ENCODE measurements at regions of chr2 and their contacts with region 1.

Region 1: DNA sequence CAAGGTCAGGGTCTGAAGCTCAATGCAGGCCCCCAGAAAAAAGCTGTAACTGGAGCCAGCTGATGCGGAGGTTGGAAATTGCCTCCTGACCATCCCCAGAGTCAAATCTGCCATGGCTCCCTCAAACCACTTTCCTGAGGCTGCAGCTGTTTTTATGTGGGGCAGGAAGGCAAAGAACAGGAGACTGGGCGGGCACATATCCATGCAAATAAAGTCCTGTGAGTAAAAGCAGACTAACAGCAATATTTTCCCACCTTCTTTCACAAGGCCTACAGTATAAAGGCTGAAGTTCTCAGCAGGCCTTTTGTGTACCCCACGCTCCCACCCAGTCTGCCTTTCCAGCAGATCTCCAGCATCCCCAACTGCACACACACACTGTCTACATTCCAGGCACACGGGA is 47.1 kb downstream of the CYP1B1 start:
- DNase-seq: no peak
- ATAC-seq: no peak; the same call in 2 of the 3 replicates
- H3K4me3 ChIP-seq: no peak overlapping the region
- H3K27ac ChIP-seq: no peak overlapping the region
- H3K4me1 ChIP-seq: no peaks in the 10 kb centered on the region
- H3K27me3 ChIP-seq: no peaks in the 10 kb centered on the region
- CTCF ChIP-seq: no peak
- EP300 ChIP-seq: no peak
- POLR2A ChIP-seq: no peak
- RAD21 ChIP-seq: no peak

Region 2: DNA sequence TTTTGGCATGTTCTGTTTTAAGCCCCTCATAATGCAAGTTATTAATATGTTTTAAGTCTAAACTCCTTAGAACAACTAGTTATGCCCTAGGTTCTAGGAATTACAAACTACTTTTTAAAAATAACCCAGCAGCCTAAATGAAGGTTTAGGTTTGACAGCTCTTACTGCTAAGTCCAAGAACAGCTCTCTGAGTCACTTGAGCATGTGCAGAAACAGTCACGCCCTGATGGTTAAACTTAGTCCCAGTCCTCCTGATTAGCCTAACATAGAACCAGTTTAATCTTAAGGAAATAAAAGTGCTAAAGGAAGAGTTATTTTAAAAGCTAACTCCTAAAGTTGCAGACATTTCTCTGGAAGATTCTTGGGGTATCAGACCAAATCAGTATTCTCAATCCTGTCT is 31.2 kb before region 1 on chr2:
- CTCF ChIA-PET with region 1: no interaction called
- POLR2A ChIA-PET with region 1: no interaction called
- in situ Hi-C with region 1: no loop called
- intact Hi-C with region 1: loop called (anchors 1 kb)
- DNase-seq: no peak
- ATAC-seq: no peak
- H3K4me3 ChIP-seq: no peak overlapping the region
- H3K27ac ChIP-seq: no peak overlapping the region
- H3K4me1 ChIP-seq: peaks cover 2% of the 10 kb centered on the region; the same call in 1 of the 2 replicates
- H3K27me3 ChIP-seq: no peaks in the 10 kb centered on the region
- CTCF ChIP-seq: no peak
- EP300 ChIP-seq: no peak
- POLR2A ChIP-seq: no peak
- RAD21 ChIP-seq: no peak

Measured in HepG2 (cell line).